Endothelial cell of umbilical vein (primary cell): ENCODE measurements at regions of chr5 and their contacts with region 1.

Region 1: GRCh38 chr5:97231025-97231636 is 48.1 kb upstream of the RIOK2 start:
- DNase-seq: peak; percentile 78
- H3K4me3 ChIP-seq: no peak overlapping the region
- H3K27ac ChIP-seq: no peak overlapping the region
- H3K4me1 ChIP-seq: peaks cover 6% of the 10 kb centered on the region
- H3K27me3 ChIP-seq: no peaks in the 10 kb centered on the region
- CTCF ChIP-seq: peak; percentile 54 to 69
- POLR2A ChIP-seq: no peak

Region 2: DNA sequence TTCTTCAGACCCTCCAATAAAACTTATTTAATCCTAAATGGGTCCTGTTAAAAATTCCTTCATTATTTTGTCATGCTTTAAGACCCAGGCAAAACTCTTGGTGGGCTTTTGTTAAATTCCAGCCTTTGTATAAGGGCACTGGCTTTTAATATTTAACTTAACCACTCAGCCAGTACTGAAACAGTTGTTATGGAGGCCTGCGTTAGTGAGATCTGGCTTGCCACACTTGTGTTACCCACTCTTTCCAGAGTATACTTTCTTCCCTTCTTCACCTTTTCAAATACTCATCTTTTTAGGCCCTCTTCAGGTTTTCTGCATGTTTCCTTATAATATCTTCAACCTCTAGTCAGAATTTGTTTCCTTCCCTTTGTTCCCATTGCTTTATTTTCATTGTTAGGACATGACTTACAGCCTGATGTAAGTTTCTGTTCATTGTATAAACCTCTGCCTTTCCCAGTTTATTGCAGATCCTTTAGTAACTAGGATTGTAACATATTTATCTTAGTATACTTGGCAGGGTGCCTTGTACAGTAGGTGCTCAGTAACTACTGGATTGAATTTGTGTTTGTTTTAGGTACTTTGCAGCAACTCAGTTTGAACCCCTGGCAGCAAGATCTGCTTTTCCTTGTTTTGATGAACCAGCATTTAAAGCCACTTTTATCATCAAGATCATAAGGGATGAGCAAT is 246.5 kb before region 1 on chr5:
- CTCF ChIA-PET with region 1: no interaction called
- POLR2A ChIA-PET with region 1: no interaction called
- dilution Hi-C with region 1: no loop called
- intact Hi-C with region 1: no loop called
- DNase-seq: peak; percentile 33
- H3K4me3 ChIP-seq: no peak overlapping the region
- H3K27ac ChIP-seq: no peak overlapping the region
- H3K4me1 ChIP-seq: no peaks in the 10 kb centered on the region
- H3K27me3 ChIP-seq: no peaks in the 10 kb centered on the region
- CTCF ChIP-seq: no peak
- POLR2A ChIP-seq: no peak

Region 3: GRCh38 chr5:97243353-97243752 is 12.2 kb after region 1 on chr5:
- CTCF ChIA-PET with region 1: interaction called, 27 read pairs
- POLR2A ChIA-PET with region 1: no interaction called
- dilution Hi-C with region 1: no loop called
- intact Hi-C with region 1: no loop called
- DNase-seq: no peak
- H3K4me3 ChIP-seq: no peak overlapping the region
- H3K27ac ChIP-seq: no peak overlapping the region
- H3K4me1 ChIP-seq: no peaks in the 10 kb centered on the region
- H3K27me3 ChIP-seq: no peaks in the 10 kb centered on the region
- CTCF ChIP-seq: no peak
- POLR2A ChIP-seq: no peak

Region 4: DNA sequence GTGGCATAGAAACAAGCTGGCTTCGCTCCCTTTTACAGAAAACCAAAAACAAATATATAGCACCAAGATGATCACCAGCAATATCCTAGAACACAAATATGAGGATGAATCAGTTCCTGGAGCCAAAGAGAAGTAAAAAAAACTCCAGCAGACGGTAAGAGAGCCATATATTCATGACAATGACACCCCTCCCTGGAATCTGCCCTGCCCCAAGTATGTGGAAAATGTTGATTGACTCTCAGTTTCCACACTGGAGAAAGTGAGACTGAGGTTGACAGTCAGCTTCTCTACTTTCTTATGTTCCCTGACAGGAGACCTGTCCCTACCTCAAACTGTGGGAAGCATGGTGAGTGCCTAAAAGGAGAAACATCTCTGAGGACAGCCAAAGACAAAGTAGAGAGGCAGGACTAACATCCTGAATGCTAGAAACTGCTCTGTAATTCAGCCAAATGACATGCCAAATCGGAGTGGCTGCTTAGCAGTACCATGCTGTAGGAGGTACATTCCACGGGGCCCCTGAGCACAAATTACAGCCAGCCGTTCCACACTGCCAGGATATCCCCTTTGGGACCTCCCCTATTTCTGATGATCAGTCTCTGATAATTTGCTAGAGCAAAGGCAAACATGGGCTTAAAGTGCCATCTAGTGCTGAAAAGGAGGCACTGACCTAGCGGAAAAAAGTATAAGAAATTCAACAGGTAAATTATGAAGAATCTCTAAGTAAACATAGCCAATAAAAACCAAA is 1118.3 kb after region 1 on chr5:
- CTCF ChIA-PET with region 1: no interaction called
- POLR2A ChIA-PET with region 1: no interaction called
- dilution Hi-C with region 1: no loop called
- intact Hi-C with region 1: loop called (anchors 1 kb)
- DNase-seq: peak; percentile 29
- H3K4me3 ChIP-seq: no peak overlapping the region
- H3K27ac ChIP-seq: peak overlapping the region; percentile 18
- H3K4me1 ChIP-seq: no peaks in the 10 kb centered on the region
- H3K27me3 ChIP-seq: no peaks in the 10 kb centered on the region
- CTCF ChIP-seq: peak; percentile 16 to 47
- POLR2A ChIP-seq: no peak

Region 5: GRCh38 chr5:98796197-98796972 is 1565.3 kb after region 1 on chr5:
- CTCF ChIA-PET with region 1: interaction called, 45 read pairs
- POLR2A ChIA-PET with region 1: no interaction called
- dilution Hi-C with region 1: no loop called
- intact Hi-C with region 1: no loop called
- DNase-seq: peak; percentile 74
- H3K4me3 ChIP-seq: no peak overlapping the region
- H3K27ac ChIP-seq: peak overlapping the region; percentile 43
- H3K4me1 ChIP-seq: no peaks in the 10 kb centered on the region
- H3K27me3 ChIP-seq: no peaks in the 10 kb centered on the region
- CTCF ChIP-seq: peak; percentile 68 to 70
- POLR2A ChIP-seq: no peak

Region 6: GRCh38 chr5:99060306-99061261 is 1829.5 kb after region 1 on chr5:
- CTCF ChIA-PET with region 1: interaction called, 10 read pairs
- POLR2A ChIA-PET with region 1: no interaction called
- dilution Hi-C with region 1: no loop called
- intact Hi-C with region 1: no loop called
- DNase-seq: peak; percentile 77
- H3K4me3 ChIP-seq: no peak overlapping the region
- H3K27ac ChIP-seq: no peak overlapping the region
- H3K4me1 ChIP-seq: peaks cover 3% of the 10 kb centered on the region
- H3K27me3 ChIP-seq: no peaks in the 10 kb centered on the region
- CTCF ChIP-seq: peak; percentile 64 to 86
- POLR2A ChIP-seq: no peak